ENCODE measurements at regions of chr1 and their contacts with region 1.

Region 1: GRCh38 chr1:999725-1000356 is at the start of gene HES4:
- DNase-seq: peak; percentile 68
- H3K4me3 Mint-ChIP-seq: peak within 1 kb of the TSS; percentile 71
- H3K27ac Mint-ChIP-seq: peak within 1 kb of the TSS; percentile 80
- H3K4me1 Mint-ChIP-seq: peaks cover 12% of the 10 kb centered on the region
- H3K27me3 Mint-ChIP-seq: peaks cover 35% of the 10 kb centered on the region
- total RNA-seq, gene HES4: 4.1 to 4.7 TPM

Region 2: DNA sequence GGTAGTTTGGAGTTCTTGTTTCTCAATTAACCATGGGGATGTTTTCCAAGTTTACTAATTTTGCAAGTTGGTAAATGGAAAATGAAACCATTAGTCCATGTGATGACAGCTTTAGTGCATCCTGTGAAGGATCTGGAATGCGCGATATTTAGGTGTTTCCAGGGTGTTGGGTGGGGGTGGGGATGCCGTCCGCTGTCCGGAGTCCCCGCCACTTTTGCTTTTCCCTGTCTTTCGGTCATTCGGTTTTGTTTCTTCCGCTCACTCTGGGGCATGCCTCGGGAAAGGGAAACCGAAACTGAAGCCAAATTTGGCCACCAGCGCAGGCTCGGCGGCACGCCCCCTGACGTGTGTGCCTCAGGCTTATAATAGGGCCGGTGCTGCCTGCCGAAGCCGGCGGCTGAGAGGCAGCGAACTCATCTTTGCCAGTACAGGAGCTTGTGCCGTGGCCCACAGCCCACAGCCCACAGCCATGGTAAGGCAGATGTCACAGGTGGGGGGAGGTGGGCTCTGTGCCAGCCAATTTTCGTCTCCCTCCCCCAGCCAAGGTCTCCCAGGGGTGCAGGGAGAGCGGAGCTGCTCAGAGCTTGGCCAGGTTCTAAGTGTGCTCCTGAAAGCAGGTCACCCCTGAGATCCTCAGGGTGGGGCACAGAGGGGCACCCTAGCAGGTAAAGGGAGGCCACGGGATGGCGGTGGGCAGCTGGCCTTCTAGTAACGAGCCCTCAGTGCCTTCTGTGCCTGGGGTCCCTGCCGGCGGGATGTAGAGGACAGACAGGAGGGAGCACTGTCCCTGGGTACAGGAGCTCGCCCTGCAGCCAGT is 13.5 kb after region 1 on chr1 and contains the start of gene ISG15:
- CTCF ChIA-PET with region 1: interaction called, 19 read pairs
- intact Hi-C with region 1: loop called (anchors 1 kb)
- DNase-seq: peak; percentile 92
- H3K4me3 Mint-ChIP-seq: peak within 1 kb of the TSS; percentile 94
- H3K27ac Mint-ChIP-seq: peak within 1 kb of the TSS; percentile 86
- H3K4me1 Mint-ChIP-seq: peaks cover 29% of the 10 kb centered on the region
- H3K27me3 Mint-ChIP-seq: peaks cover 4% of the 10 kb centered on the region
- total RNA-seq, gene ISG15: 143 to 147 TPM

Region 3: DNA sequence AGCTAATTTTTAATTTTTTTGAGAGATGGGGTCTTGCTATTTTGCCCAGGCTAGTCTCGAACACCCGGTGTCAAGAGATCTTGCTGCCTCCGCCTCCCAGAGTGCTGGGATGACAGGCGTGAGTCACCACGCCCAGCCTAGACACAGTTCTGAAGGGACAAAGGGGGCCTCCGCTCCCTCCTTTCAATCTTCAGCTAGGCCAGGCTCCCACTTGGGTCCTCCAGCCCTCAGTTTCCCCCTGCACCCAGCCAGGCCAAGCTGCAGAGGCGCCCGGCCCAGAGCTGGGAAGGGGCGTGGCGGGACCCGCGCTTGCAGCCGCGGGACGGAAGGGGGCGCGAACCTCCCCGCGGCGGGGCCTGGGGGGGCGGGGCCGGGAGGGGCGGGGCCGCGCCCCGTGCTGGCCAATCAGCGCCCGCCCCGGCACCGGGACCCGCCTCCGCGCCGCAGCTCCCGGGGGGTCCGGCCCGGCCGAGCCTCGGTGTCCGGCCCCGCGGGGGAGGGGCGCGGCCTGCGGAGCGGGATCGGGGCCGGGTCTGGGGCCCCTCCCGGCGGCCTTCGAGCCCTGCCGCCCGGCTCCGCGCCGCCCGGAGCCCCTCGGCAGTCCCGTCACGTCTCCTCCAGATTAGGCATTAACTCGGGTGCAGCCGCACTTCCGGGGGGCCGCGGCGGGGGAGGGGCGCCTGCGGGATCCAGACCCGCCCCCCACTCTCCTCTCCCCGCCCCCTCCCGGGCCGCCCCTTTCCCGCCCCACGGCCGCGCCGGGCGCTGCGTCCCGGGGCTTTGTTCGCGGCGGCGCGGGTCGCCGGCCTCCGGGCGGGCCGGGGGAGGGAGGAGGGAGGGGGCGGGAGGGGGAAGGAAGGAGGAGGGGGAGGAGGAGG is 19.5 kb after region 1 on chr1:
- CTCF ChIA-PET with region 1: interaction called, 19 read pairs
- intact Hi-C with region 1: no loop called
- DNase-seq: peak; percentile 77
- H3K4me3 Mint-ChIP-seq: peak overlapping the region; percentile 68
- H3K27ac Mint-ChIP-seq: no peak overlapping the region
- H3K4me1 Mint-ChIP-seq: peaks cover 16% of the 10 kb centered on the region
- H3K27me3 Mint-ChIP-seq: peaks cover 4% of the 10 kb centered on the region

Region 4: DNA sequence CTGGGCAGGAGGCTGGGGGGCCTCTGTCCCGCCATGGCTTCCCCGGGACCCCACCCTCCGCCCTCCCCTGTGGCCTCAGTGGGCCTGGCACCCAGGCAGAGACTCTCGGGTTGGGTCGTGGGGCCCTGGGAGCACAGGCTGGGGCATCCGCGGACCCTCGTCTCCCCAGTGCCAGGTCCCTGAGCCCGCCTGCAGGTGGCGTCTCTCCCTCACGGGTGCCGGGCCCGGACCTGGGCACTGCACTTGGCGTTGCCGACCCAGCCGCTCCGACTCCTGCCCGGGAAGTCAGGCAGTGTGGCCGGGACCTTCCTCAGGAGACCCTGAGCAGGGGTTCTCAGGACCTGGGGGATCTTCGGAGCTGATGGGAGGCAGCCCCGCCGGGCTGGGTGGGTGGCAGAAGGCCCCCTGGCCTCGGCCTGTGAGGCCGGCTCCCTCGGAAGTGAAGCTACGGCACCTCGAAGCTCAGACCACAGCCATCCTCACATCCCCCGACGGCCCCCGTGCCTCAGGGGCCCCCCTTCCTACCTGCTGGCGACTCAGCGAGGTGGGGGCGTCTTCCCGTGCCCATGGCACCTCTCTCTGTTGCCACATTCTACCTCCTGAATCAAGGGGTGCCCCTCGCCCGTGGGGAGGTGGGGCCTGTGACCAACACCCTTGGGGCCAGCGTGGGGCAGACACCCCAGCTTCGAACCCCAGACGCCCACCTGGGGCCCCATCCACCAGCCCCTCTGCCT is 122.4 kb after region 1 on chr1:
- CTCF ChIA-PET with region 1: no interaction called
- intact Hi-C with region 1: no loop called
- DNase-seq: peak; percentile 89
- H3K4me3 Mint-ChIP-seq: no peak overlapping the region
- H3K27ac Mint-ChIP-seq: no peak overlapping the region
- H3K4me1 Mint-ChIP-seq: peaks cover 2% of the 10 kb centered on the region
- H3K27me3 Mint-ChIP-seq: no peaks in the 10 kb centered on the region